ENCODE measurements at regions of chr11 and their contacts with region 1.

Region 1: DNA sequence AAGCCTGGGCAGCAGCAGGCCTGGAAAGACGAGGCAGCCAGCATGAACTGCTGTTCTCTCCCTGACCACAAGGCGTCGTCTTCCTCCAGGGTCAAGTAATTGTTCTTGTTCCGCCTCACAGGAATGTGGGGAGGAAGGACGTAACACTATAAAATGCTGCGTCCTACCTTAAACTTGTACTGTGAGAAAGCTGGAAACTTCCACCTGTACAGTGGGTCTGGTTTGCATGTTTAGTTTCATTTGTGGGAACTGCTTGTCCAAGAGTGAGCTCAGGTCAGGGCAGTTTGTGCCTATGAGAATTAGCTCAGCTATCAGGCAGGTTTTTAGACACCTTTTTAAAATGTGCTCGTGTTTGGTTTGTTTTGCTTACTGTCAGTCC is 55.2 kb downstream of the PANX1 start:
- DNase-seq: peak; percentile 17
- ATAC-seq: peak; percentile 91
- H3K4me3 ChIP-seq: no peak overlapping the region
- H3K27ac ChIP-seq: no peak overlapping the region
- H3K4me1 ChIP-seq: peaks cover 9% of the 10 kb centered on the region
- H3K27me3 ChIP-seq: no peaks in the 10 kb centered on the region
- CTCF ChIP-seq: peak; percentile 77 to 90 (median 86)
- EP300 ChIP-seq: no peak
- POLR2A ChIP-seq: no peak
- RAD21 ChIP-seq: peak; percentile 87

Region 2: GRCh38 chr11:93921695-93922468 is 262.0 kb before region 1 on chr11:
- CTCF ChIA-PET with region 1: interaction called, 17 read pairs
- POLR2A ChIA-PET with region 1: no interaction called
- RAD21 ChIA-PET with region 1: interaction called, 3 read pairs
- SMC1A ChIA-PET with region 1: interaction called, 4 read pairs
- in situ Hi-C with region 1: no loop called
- intact Hi-C with region 1: loop called (anchors 5 kb)
- DNase-seq: peak; percentile 4
- ATAC-seq: peak; percentile 96
- H3K4me3 ChIP-seq: no peak overlapping the region
- H3K27ac ChIP-seq: no peak overlapping the region
- H3K4me1 ChIP-seq: no peaks in the 10 kb centered on the region
- H3K27me3 ChIP-seq: no peaks in the 10 kb centered on the region; a peak in 2 of 4 replicates
- CTCF ChIP-seq: peak; percentile 58 to 68 (median 65)
- EP300 ChIP-seq: no peak
- POLR2A ChIP-seq: no peak
- RAD21 ChIP-seq: peak; percentile 72

Region 3: DNA sequence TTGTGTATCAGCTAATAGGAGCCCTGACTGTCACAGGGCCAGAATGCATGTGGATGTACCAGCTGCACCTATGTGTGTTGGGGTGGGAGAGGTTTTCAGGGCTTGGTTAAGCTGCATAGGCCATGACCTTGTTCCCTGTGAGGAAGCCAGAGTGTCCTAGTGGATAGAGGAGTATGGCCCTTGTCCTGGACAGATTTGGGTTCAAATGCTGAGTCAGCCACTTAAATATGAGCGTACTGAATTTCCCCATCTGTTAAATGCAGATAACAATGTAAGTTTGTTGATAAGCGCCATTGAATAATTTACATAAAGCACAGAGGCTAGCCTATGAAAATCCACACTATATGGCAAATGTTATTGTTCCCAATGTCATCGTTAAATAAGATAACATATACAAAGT is 19.2 kb after region 1 on chr11:
- CTCF ChIA-PET with region 1: interaction called, 10 read pairs
- POLR2A ChIA-PET with region 1: no interaction called
- RAD21 ChIA-PET with region 1: interaction called, 3 read pairs
- SMC1A ChIA-PET with region 1: no interaction called
- in situ Hi-C with region 1: no loop called
- intact Hi-C with region 1: no loop called
- DNase-seq: no peak
- ATAC-seq: no peak
- H3K4me3 ChIP-seq: no peak overlapping the region
- H3K27ac ChIP-seq: no peak overlapping the region
- H3K4me1 ChIP-seq: no peaks in the 10 kb centered on the region
- H3K27me3 ChIP-seq: no peaks in the 10 kb centered on the region
- CTCF ChIP-seq: no peak
- EP300 ChIP-seq: no peak
- POLR2A ChIP-seq: no peak
- RAD21 ChIP-seq: no peak

Region 4: GRCh38 chr11:94303966-94304958 is 120.4 kb after region 1 on chr11 and contains the start of gene IZUMO1R:
- CTCF ChIA-PET with region 1: interaction called, 11 read pairs
- POLR2A ChIA-PET with region 1: no interaction called
- RAD21 ChIA-PET with region 1: no interaction called
- SMC1A ChIA-PET with region 1: interaction called, 4 read pairs
- in situ Hi-C with region 1: no loop called
- intact Hi-C with region 1: no loop called
- DNase-seq: no peak
- ATAC-seq: no peak
- H3K4me3 ChIP-seq: no peak within 1 kb of the TSS
- H3K27ac ChIP-seq: no peak within 1 kb of the TSS
- H3K4me1 ChIP-seq: no peaks in the 10 kb centered on the region
- H3K27me3 ChIP-seq: peaks cover 0 to 4% of the 10 kb centered on the region in 2 experiments; a peak in 1 of 4 replicates
- CTCF ChIP-seq: no peak
- EP300 ChIP-seq: no peak
- POLR2A ChIP-seq: no peak
- RAD21 ChIP-seq: no peak
- polyA plus RNA-seq, gene IZUMO1R: not detected

Measured in GM12878 (cell line).